ENCODE measurements at regions of chr15 and their contacts with region 1.

Region 1: DNA sequence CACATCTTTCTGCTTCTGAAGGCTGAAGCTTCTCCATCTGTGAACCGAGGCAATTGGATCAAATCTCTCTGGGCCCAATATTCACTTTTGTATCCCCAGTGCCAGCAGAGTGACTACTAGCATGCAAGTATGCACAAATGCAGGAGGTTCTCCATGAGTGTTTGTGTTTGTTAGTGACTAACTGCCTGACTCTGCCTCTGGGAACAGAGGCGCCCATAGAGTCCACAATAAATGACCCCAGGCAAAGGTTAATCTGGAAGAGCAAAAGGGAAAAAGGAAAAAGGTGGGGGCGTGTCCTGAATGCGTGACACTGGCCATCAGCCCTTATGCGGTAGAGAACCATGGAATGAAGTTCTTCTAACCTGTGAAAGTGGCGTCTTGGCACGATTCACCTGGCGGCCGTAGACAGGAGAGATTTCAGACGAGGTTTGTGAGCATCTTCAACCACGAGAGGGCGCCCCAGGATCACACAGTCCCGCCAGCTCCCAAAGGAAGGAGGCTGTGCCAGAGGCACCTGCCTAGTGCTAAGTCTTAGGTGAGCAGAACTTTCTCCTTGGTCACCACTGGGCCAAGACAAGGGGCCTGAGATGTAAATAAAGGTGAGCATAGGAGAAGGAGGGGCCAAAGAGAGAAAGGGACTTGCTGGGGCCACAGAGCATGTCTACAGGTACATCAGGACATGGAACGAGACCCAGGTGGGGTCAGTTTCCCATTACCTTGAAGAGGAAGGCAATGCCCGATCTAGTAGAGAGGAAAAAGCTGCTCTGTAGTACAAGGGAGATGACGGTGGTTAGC is 44.2 kb downstream of the RBPMS2 start:
- H3K4me3 ChIP-seq: no peak overlapping the region
- H3K27ac ChIP-seq: no peak overlapping the region
- H3K4me1 ChIP-seq: no peaks in the 10 kb centered on the region
- CTCF ChIP-seq: peak; percentile 84

Region 2: DNA sequence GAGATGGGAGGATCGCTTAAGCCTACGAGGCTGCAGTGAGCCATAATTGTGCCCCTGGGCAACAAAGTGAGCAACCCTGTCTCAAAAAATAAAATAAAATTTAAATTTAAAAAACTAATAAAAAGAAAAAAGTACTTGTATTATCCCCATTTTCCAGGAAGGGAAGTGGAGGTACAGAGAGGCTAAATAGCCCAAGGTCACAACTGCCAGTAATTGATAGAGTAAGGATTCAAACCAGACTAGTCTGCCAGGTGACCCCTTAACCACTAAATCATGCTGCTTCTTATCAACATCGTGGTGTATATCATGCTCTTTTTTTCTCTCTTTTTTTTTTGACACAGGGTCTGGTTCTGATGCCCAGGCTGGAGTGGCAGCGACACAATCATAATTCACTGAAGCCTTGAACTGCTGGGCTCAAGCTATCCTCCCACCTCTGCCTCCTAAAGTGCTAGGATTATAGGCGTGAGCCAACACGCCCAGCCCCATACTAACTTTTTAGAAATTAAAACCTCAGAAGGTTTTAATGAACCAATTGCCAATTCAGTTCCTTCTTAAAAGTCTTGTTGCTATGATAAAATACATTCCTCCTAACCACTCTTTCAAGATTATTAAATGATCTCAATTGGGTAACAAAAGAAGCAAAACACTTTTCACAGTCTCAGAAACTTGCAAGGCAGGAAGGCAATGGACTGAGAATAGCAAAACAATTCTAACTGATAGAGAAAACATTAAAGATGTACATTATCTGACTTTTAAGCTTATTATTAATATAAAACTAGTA is 927.9 kb before region 1 on chr15:
- CTCF ChIA-PET with region 1: no interaction called
- POLR2A ChIA-PET with region 1: no interaction called
- H3K4me3 ChIP-seq: no peak overlapping the region
- H3K27ac ChIP-seq: no peak overlapping the region
- H3K4me1 ChIP-seq: peaks cover 8% of the 10 kb centered on the region; the same call in 1 of the 2 replicates
- CTCF ChIP-seq: no peak

Region 3: GRCh38 chr15:64373360-64373759 is 357.8 kb before region 1 on chr15:
- CTCF ChIA-PET with region 1: no interaction called
- POLR2A ChIA-PET with region 1: no interaction called
- H3K4me3 ChIP-seq: no peak overlapping the region
- H3K27ac ChIP-seq: no peak overlapping the region
- H3K4me1 ChIP-seq: no peaks in the 10 kb centered on the region
- CTCF ChIP-seq: no peak

Region 4: GRCh38 chr15:64681424-64682024 is 49.7 kb before region 1 on chr15:
- CTCF ChIA-PET with region 1: interaction called, 127 read pairs
- POLR2A ChIA-PET with region 1: interaction called, 5 read pairs
- H3K4me3 ChIP-seq: no peak overlapping the region
- H3K27ac ChIP-seq: no peak overlapping the region
- H3K4me1 ChIP-seq: no peaks in the 10 kb centered on the region
- CTCF ChIP-seq: peak; percentile 85

Region 5: GRCh38 chr15:64695561-64695992 is 35.6 kb before region 1 on chr15:
- CTCF ChIA-PET with region 1: interaction called, 20 read pairs
- POLR2A ChIA-PET with region 1: no interaction called
- H3K4me3 ChIP-seq: no peak overlapping the region
- H3K27ac ChIP-seq: no peak overlapping the region
- H3K4me1 ChIP-seq: peaks cover 13% of the 10 kb centered on the region
- CTCF ChIP-seq: no peak

Region 6: DNA sequence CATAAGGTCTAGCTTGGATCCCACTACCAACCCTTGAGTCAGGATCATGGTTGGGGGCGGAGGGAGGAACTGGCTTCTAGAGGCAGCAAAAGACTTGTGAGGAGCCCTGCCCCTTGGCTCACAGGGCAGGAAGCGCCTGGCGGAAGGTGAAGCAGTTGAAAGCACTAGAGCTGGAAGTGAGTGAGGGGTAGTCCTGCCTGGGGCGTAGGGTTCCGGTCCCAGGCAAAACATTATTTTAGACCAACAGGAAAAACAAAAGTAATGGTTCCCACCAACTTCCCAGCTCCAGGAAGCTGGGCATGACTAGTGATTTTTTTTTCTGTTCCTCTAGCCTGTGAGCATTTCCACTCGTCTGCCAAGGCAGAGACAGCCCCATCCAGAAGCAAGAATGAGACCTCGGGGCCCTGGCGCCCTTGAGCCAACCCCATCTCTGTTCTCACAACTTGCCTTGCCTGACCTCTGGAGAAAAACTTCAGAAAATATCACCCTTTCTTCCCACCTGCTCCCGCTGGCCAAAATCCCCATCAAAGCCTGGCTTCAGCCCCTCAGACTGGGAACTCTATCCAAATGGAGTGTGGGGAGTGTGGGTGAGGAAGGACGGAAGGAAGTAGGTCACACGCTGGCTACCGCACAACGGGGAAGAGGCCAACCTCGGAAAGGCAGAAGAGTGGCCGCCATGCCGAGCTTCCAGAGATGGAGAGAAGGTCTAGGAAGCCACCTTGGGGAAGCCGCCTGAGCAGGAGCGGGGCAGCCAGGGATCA is 13.3 kb before region 1 on chr15:
- CTCF ChIA-PET with region 1: interaction called, 18 read pairs
- POLR2A ChIA-PET with region 1: no interaction called
- H3K4me3 ChIP-seq: no peak overlapping the region
- H3K27ac ChIP-seq: no peak overlapping the region
- H3K4me1 ChIP-seq: no peaks in the 10 kb centered on the region
- CTCF ChIP-seq: no peak

Region 7: GRCh38 chr15:64772488-64772887 is 41.3 kb after region 1 on chr15:
- CTCF ChIA-PET with region 1: no interaction called
- POLR2A ChIA-PET with region 1: no interaction called
- H3K4me3 ChIP-seq: no peak overlapping the region
- H3K27ac ChIP-seq: no peak overlapping the region
- H3K4me1 ChIP-seq: no peaks in the 10 kb centered on the region
- CTCF ChIP-seq: no peak

Region 8: DNA sequence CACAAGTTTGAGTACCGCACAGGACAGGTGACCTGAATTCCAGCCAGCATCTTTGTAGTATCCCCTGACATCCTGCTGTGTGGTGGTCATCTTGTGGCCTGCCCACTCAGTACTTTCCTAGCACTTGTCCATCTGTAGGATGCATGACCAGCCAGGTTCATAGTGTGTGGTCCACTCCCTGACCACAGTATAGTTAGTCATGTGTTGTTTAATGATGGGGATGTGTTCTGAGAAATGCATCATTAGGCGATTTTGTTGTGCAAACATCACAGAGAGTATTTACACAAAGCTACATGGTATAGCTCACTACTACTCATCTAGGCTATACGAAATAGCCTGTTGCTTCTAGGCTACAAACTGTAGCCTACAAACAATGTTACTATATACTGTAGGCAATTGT is 61.1 kb after region 1 on chr15:
- CTCF ChIA-PET with region 1: no interaction called
- POLR2A ChIA-PET with region 1: no interaction called
- H3K4me3 ChIP-seq: no peak overlapping the region
- H3K27ac ChIP-seq: no peak overlapping the region
- H3K4me1 ChIP-seq: no peaks in the 10 kb centered on the region
- CTCF ChIP-seq: no peak

Region 9: DNA sequence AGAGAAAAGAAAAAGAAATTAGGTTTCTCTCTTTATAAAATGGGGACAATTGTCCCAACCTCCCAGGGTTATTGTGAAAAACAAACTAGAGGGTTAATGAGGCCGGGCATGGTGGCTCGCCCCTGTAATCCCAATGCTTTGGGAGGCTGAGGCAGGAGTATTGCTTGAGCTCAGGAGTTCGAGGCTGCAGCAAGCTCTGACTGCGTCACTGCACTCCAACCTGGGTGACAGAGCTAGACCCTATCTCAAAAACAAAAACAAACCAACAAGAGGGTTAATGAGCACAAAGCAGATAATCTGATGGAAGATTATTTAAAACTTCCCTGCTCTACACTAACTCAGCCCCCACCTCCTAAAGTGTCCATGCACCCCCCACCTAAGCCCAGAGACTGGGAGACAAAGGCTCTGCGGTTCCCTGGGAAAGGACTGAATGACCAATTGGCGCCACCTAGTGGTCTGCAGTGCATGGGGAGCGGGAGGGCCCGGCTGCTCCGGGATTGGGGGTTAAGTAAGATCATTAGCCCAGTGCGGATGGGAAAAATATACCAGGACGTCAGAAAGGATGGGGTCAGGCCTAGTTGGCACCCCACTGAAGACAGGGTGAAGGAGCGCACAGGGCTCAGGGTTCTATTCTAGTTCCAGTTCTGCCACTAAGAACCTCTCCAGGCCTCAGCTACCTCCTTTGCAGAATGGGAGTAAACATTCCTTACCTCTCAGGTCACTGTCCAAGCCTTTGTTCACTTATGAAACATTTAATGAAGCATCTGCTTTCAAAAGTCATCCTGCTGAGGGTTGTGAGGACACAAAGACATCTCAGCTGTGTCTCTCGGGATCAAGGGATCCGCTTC is 78.7 kb after region 1 on chr15:
- CTCF ChIA-PET with region 1: interaction called, 68 read pairs
- POLR2A ChIA-PET with region 1: no interaction called
- H3K4me3 ChIP-seq: no peak overlapping the region
- H3K27ac ChIP-seq: no peak overlapping the region
- H3K4me1 ChIP-seq: no peaks in the 10 kb centered on the region
- CTCF ChIP-seq: 0 out of 2 replicates have a peak, but pooled peaks have one; percentile 56